ENCODE measurements at regions of chrX and their contacts with region 1.

Region 1: DNA sequence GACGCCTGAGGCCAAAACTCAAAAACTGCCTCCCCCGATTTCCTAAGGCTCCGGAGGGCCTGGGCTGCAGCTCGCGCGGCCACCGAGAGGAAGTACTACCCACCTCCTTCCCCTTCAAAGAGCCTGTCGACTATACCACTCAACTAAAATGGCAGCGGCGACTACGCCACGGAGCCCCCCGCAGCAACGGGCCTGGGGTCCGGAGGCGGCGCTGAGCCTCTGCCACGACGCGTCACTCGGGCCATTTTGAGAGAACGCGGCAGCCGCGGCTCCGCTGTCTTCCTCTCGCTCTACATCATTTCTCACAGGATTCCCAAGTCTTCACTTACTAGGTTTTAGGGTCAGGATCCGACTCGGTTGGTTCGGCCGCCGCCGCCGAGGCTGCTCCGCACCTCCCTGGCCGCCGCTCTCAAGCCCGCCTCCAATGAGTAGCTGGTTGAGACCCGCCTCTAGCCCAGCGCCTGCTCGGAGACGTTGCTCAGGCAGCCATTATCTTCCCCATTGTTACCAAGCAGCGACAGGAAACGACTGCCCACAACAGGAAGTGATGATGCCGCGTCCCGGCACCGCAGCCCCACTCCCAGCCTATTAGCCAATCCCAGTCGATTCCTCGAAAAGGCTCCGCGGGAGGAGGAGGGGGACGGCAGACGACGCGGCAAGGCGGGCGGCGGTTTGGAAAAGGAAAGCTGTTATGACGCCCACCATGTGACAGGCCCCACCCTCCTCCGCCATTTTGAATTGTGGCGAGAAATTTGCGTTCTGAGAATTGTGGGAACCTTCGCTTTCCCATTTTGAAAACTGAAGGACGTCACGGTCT is at the start of gene RLIM:
- DNase-seq: peak; percentile 74
- ATAC-seq: peak; percentile 83
- H3K4me3 Mint-ChIP-seq: peak within 1 kb of the TSS; percentile 96
- H3K27ac Mint-ChIP-seq: peak within 1 kb of the TSS; percentile 96
- H3K4me1 Mint-ChIP-seq: peaks cover 22% of the 10 kb centered on the region
- H3K27me3 Mint-ChIP-seq: no peaks in the 10 kb centered on the region
- CTCF ChIP-seq: no peak
- total RNA-seq, gene RLIM: 32.2 and 34.0 TPM in 2 replicates

Region 2: DNA sequence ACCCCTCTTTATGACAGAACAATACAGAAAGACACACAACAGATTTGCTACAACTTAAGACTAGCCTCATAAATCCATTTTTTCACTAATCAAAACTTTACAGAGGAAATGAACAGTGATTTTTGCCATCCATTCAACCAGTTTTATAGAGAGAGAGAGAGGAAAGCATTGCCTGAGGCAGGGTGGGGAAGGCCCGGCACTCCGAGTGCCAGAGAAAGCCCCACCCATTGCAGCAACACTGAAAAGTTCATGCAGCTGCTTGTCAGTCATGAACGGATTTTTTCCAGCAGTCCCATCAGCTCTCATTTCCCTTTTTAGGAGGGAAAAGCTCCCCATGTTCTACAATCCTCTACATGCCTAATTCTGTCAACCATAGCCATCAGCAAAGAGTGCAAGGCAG is 814.4 kb before region 1 on chrX:
- CTCF ChIA-PET with region 1: no interaction called
- POLR2A ChIA-PET with region 1: no interaction called
- intact Hi-C with region 1: no loop called
- DNase-seq: no peak
- ATAC-seq: no peak
- H3K4me3 Mint-ChIP-seq: no peak overlapping the region
- H3K27ac Mint-ChIP-seq: no peak overlapping the region
- H3K4me1 Mint-ChIP-seq: no peaks in the 10 kb centered on the region
- H3K27me3 Mint-ChIP-seq: no peaks in the 10 kb centered on the region
- CTCF ChIP-seq: no peak

Region 3: DNA sequence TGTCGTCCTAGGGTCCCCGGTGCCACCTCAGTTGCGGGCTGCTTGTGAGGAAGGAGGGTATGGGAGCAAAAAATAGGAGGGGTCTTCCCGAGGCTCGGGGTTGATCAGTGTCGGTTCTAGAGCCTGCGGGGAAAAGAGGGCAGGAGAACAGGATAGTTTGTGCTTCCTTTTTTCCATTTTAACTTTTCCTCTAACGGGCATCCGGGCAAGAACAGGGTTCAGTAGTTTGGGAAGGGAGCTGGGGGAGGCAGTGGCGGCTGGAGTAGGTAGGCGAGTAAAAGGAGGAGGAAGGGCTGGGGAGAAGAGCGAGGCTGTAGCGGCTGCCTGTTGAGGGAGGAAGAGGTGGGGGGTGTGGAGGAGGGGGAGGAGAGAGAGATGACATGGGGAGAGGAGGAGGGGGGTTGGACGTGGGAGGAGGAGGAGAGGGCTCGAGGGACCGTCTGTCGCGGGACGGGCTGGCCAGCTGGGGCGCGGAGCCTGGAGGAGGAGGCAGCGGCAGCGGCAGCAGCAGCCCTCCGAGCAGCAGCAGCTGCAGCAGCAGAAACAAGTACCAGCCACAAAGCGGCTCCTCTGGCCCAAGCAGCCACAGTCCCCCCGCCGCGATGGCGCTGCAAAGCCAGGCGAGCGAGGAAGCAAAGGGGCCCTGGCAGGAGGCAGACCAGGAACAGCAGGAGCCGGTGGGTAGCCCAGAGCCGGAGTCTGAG is 193.1 kb before region 1 on chrX and contains the start of gene SLC16A2:
- CTCF ChIA-PET with region 1: no interaction called
- POLR2A ChIA-PET with region 1: no interaction called
- intact Hi-C with region 1: loop called (anchors 5 kb)
- DNase-seq: peak; percentile 22
- ATAC-seq: peak; percentile 62
- H3K4me3 Mint-ChIP-seq: peak within 1 kb of the TSS; percentile 80
- H3K27ac Mint-ChIP-seq: no peak within 1 kb of the TSS
- H3K4me1 Mint-ChIP-seq: peaks cover 15% of the 10 kb centered on the region
- H3K27me3 Mint-ChIP-seq: peaks cover 22% of the 10 kb centered on the region
- CTCF ChIP-seq: no peak
- total RNA-seq, gene SLC16A2: not detected in 2 replicates

Region 4: DNA sequence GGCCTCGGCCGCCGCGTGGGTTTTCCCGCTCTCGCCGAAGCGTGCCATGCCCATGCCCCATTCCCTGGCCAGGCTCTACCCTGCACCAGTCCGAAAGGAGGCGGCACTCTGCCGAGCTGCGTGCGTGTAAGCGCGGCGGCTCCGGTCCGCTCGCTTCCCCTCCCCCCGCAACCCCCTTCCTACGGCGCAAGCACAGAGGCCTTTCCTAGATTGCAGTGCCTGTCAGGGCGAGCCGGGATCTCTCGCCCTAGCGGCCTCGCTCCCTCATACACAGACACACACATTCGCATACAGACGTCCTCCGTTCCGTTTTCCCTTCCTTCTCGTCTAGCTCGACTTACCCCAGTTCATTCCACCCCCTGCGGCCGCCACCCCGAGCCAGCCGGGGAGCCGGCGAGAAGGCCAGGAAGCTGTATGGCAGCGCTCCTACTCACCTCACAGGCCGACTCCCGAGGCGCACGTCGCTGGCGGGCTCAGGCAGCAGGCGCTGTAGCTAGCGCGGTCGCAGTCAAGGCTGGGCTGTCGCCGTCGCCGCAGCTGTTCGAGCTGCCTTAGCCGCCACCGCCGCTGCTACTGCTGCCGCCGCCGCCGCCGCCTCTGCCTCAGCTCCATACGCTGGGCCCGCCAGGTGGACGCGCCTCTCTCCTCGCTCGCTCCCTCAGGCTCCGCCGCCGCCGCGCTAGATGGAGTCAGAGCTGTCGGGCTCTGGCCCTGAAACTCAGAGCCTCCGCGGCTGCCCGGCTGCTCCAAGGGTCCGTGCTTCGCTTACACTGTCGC is 310.3 kb after region 1 on chrX:
- CTCF ChIA-PET with region 1: no interaction called
- POLR2A ChIA-PET with region 1: interaction called, 9 read pairs
- intact Hi-C with region 1: loop called (anchors 5 kb)
- DNase-seq: peak; percentile 18
- ATAC-seq: peak; percentile 55
- H3K4me3 Mint-ChIP-seq: peak overlapping the region; percentile 87
- H3K27ac Mint-ChIP-seq: peak overlapping the region; percentile 80
- H3K4me1 Mint-ChIP-seq: peaks cover 25% of the 10 kb centered on the region
- H3K27me3 Mint-ChIP-seq: peaks cover 5% of the 10 kb centered on the region
- CTCF ChIP-seq: no peak

Region 5: DNA sequence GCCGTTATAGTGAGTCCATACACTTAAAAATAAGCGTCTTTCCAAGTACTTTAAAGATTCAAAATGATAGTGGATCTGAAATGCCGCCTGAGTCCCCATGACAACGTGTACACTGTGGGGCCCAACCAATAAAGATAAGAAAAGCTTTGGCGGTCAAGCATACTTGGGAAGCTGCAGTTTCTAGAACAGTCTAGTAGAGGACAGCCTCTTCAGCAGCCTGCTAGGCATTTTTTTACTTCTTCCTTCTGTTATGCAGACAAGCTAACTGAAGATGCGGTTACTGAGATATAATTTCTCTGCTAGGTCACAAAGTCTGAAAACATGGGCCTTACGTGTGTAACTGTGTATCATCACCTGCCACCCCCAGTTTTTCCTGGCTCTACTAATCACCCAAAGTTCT is 659.2 kb after region 1 on chrX:
- CTCF ChIA-PET with region 1: no interaction called
- POLR2A ChIA-PET with region 1: interaction called, 6 read pairs
- intact Hi-C with region 1: loop called (anchors 10 kb)
- DNase-seq: no peak
- ATAC-seq: peak; percentile 2
- H3K4me3 Mint-ChIP-seq: peak overlapping the region; percentile 97
- H3K27ac Mint-ChIP-seq: peak overlapping the region; percentile 93
- H3K4me1 Mint-ChIP-seq: peaks cover 47% of the 10 kb centered on the region
- H3K27me3 Mint-ChIP-seq: no peaks in the 10 kb centered on the region
- CTCF ChIP-seq: no peak

Region 6: GRCh38 chrX:76427560-76428242 is 1813.4 kb after region 1 on chrX and contains the start of gene MAGEE1:
- CTCF ChIA-PET with region 1: no interaction called
- POLR2A ChIA-PET with region 1: no interaction called
- intact Hi-C with region 1: loop called (anchors 5 kb)
- DNase-seq: peak; percentile 70
- ATAC-seq: peak; percentile 83
- H3K4me3 Mint-ChIP-seq: peak within 1 kb of the TSS; percentile 91
- H3K27ac Mint-ChIP-seq: peak within 1 kb of the TSS; percentile 76
- H3K4me1 Mint-ChIP-seq: peaks cover 11% of the 10 kb centered on the region
- H3K27me3 Mint-ChIP-seq: no peaks in the 10 kb centered on the region
- CTCF ChIP-seq: no peak
- total RNA-seq, gene MAGEE1: 3.1 and 3.3 TPM in 2 replicates